Activated B cell treated with CpG ODN at 0.5 μM for 24 hours (primary cell): ENCODE measurements at regions of chr9 and their contacts with region 1.

Region 1: DNA sequence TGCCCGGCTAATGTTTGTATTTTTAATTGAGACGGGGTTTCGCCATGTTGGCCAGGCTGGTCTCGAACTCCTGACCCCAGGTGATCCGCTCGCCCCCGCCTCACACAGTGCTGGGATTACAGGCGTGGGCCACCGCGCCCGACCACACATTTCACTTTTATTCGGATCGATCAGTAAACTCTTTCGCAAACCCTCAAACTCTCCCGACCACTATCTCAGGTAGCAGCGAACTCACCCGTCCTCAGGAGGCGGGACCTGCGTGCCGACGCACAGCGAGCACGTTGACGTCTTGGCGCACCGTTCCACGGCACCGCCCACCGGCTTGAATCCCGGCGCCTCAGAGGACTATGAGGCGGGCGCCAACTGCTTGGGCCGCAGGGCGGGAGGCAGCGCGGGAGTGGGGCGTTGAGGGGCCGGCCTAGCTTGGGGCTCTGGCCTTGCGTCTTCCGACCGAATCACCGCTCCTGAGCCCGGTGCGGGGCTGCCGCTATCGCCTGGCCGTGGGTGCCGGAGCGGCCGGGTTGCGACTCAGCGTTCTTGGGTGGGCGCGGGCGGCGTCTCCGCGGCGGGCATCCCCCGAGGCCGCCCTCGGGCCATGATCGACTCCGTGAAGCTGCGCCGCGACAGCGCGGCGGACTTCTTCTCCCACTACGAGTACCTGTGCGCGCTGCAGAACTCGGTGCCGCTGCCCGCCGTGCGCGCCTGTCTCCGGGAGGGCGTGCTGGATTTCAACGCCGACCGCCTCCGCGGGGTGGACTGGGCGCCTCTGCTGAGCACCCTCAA is at the start of gene CEP78:
- DNase-seq: peak; percentile 83
- ATAC-seq: peak; percentile 98
- H3K4me3 Mint-ChIP-seq: peak within 1 kb of the TSS; percentile 97
- H3K27ac Mint-ChIP-seq: peak within 1 kb of the TSS; percentile 93
- H3K4me1 Mint-ChIP-seq: peaks cover 23% of the 10 kb centered on the region
- H3K27me3 Mint-ChIP-seq: no peaks in the 10 kb centered on the region
- CTCF ChIP-seq: no peak
- total RNA-seq, gene CEP78: 16.9 and 18.1 TPM in 2 replicates

Region 2: DNA sequence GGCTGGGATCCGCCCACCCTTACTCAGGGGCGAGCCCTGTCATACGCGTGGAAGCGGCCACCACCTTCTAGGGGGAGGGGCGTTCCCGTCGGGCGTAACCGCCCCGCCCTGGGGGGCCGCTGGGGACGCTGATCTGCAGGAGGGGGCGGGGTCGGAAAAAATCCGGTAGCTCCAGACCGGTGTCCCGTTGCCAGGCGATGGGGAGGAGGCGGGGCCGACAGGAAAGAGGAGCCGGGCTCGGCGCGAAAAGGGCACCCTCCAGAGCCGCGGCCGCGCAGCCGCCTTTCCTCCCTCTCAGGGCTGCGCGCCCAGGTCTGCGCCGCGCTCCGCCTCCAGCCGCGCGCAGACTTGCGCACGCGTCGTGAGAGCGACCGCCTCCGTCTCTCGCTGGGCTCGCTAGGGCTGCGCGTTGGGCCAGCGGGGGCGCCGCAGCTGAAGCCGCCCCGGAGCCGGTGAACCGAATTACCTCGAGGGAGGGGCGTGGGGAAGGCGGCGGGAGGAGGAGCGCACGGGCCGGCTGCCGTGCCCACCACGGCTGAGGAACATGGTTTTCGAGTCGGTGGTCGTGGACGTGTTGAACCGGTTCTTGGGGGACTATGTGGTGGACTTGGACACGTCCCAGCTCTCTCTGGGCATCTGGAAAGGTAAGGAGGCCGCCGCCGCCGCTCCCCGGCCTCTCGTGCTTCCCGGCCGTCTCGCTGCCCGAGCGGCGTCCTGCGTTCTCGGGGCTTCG is 1058.6 kb before region 1 on chr9 and contains the start of gene VPS13A:
- CTCF ChIA-PET with region 1: no interaction called
- POLR2A ChIA-PET with region 1: no interaction called
- intact Hi-C with region 1: loop called (anchors 1 kb)
- DNase-seq: peak; percentile 92
- ATAC-seq: peak; percentile 82
- H3K4me3 Mint-ChIP-seq: peak within 1 kb of the TSS; percentile 92
- H3K27ac Mint-ChIP-seq: peak within 1 kb of the TSS; percentile 83
- H3K4me1 Mint-ChIP-seq: peaks cover 29% of the 10 kb centered on the region
- H3K27me3 Mint-ChIP-seq: no peaks in the 10 kb centered on the region
- CTCF ChIP-seq: no peak
- total RNA-seq, gene VPS13A: 58.0 and 69.8 TPM in 2 replicates

Region 3: DNA sequence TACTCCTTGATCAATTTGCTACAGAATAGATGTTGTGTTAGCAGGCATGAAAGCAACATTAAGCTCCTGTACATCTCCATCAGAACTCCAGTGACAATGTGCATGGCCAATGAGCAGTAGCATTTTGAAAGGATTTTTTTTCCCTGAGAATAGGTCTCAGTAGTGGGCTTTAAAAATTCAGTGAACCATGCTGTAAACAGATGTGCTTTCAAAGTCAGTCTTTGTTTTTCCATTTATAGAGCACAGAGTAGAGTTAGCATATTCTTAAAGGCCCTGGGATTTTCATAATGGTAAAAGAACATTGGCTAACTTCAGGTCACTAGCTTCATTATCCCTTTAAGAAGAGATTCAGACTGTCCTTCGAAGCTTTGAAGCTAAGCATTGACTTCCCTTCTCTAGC is 907.8 kb before region 1 on chr9:
- CTCF ChIA-PET with region 1: no interaction called
- POLR2A ChIA-PET with region 1: no interaction called
- intact Hi-C with region 1: no loop called
- DNase-seq: no peak
- ATAC-seq: no peak
- H3K4me3 Mint-ChIP-seq: no peak overlapping the region
- H3K27ac Mint-ChIP-seq: no peak overlapping the region
- H3K4me1 Mint-ChIP-seq: no peaks in the 10 kb centered on the region
- H3K27me3 Mint-ChIP-seq: no peaks in the 10 kb centered on the region
- CTCF ChIP-seq: no peak

Region 4: GRCh38 chr9:77521091-77521490 is 714.9 kb before region 1 on chr9:
- CTCF ChIA-PET with region 1: no interaction called
- POLR2A ChIA-PET with region 1: interaction called, 15 read pairs
- intact Hi-C with region 1: no loop called
- DNase-seq: no peak
- ATAC-seq: no peak
- H3K4me3 Mint-ChIP-seq: no peak overlapping the region
- H3K27ac Mint-ChIP-seq: no peak overlapping the region
- H3K4me1 Mint-ChIP-seq: no peaks in the 10 kb centered on the region
- H3K27me3 Mint-ChIP-seq: peaks cover 1% of the 10 kb centered on the region
- CTCF ChIP-seq: no peak

Region 5: DNA sequence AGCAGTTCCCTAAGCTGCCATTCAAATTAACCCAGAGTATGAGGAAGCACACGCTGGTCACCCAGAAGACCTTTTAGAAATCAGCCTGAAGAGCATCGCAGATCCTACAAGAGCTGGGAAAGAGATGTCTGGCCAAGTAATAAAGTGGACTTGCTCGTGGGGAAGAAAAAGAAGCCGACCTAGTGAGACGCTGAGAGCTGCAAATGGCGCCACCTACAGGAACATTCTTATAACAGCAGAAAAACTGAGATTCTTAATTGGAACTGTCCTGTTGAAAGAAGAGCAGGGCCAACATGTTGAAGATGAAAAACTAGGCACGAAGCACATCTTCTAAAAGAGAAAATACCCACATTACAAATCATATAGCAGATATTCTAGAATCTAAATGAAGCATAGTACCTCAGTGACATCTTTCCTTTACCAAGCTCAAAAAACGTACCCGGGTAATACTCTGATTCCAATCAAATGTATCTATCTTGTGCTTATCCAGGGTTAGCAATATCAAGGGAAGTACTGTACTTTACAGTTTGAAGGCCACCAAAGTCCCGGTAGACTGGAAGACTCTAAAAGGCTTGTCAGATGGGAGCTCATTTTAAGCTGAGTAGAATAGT is 200.5 kb before region 1 on chr9:
- CTCF ChIA-PET with region 1: no interaction called
- POLR2A ChIA-PET with region 1: interaction called, 3 read pairs
- intact Hi-C with region 1: loop called (anchors 10 kb)
- DNase-seq: no peak
- ATAC-seq: no peak
- H3K4me3 Mint-ChIP-seq: no peak overlapping the region
- H3K27ac Mint-ChIP-seq: no peak overlapping the region
- H3K4me1 Mint-ChIP-seq: peaks cover 17% of the 10 kb centered on the region
- H3K27me3 Mint-ChIP-seq: peaks cover 45% of the 10 kb centered on the region
- CTCF ChIP-seq: no peak

Region 6: DNA sequence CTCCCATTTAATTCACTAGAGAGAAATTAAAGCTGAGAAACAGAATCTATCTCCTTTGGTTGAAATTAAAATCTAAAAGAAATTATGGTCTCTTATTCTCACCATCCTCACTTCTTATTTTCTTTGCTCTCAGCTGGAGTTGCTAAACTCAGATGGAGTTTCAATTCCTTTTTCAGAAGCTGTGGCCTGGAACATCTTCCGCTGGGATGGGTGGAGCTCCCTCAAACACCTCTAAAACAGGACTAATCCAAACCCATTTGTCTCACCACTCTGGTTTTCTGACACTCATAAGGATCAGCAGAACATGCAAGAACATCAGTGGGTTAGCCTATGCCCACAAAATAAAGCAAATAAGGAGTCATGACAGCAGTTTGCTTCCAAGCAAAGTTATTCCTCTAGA is 39.7 kb before region 1 on chr9:
- CTCF ChIA-PET with region 1: no interaction called
- POLR2A ChIA-PET with region 1: no interaction called
- intact Hi-C with region 1: loop called (anchors 5 kb)
- DNase-seq: no peak
- ATAC-seq: peak; percentile 31
- H3K4me3 Mint-ChIP-seq: peak overlapping the region; percentile 64
- H3K27ac Mint-ChIP-seq: peak overlapping the region; percentile 73
- H3K4me1 Mint-ChIP-seq: peaks cover 52% of the 10 kb centered on the region
- H3K27me3 Mint-ChIP-seq: no peaks in the 10 kb centered on the region
- CTCF ChIP-seq: no peak

Region 7: DNA sequence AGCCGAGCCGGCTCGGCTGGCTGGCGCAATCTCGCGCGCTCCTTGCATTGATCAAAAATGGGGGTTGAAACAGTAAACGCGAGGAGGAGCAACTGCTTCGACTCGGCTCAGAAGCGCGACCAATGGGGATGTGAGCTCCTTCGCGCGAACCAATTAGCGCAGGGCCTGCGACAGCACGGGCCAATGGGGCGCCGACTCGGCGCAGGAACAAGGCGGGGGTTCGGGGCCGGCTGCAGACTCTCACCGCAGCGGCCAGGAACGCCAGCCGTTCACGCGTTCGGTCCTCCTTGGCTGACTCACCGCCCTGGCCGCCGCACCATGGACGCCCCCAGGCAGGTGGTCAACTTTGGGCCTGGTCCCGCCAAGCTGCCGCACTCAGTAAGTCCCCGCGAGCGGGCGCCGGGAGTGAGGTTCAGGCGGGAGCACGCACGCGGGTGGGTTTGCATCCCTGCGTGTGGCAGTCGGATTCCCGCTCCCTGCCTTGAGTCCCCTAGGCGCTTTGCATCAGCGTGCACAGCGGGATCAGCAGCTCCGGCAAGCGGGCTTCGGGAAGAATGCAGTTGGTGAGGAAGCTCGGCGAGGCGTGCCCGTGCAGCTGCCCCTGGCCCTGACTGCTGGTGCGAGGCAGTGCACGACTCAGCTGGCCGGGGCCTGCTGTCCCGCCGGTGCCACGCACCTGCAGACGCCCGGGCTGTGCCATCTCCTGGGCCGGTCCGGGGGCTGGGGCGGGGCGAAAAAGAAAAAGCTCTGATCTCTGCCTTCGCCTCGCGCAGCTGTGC is 61.1 kb after region 1 on chr9 and contains the start of gene PSAT1:
- CTCF ChIA-PET with region 1: no interaction called
- POLR2A ChIA-PET with region 1: interaction called, 10 read pairs
- intact Hi-C with region 1: loop called (anchors 1 kb)
- DNase-seq: peak; percentile 75
- ATAC-seq: peak; percentile 96
- H3K4me3 Mint-ChIP-seq: peak within 1 kb of the TSS; percentile 89
- H3K27ac Mint-ChIP-seq: peak within 1 kb of the TSS; percentile 82
- H3K4me1 Mint-ChIP-seq: peaks cover 24% of the 10 kb centered on the region
- H3K27me3 Mint-ChIP-seq: peaks cover 7% of the 10 kb centered on the region
- CTCF ChIP-seq: no peak
- total RNA-seq, gene PSAT1: 58.3 and 59.4 TPM in 2 replicates